Pancreas (tissue), 10 donors: ENCODE measurements at regions of chr7 and their contacts with region 1.

Region 1: GRCh38 chr7:100675581-100676350 is 2.2 kb downstream of the GNB2 start:
- DNase-seq: peak; percentile 71 to 92 (median 78)
- ATAC-seq: peak; percentile 4 to 13 (median 10)
- H3K4me3 ChIP-seq: peak overlapping the region; percentile 87 to 91 (median 90)
- H3K27ac ChIP-seq: peak overlapping the region; percentile 36 to 98 (median 96)
- H3K4me1 ChIP-seq: no peaks in the 10 kb centered on the region
- H3K27me3 ChIP-seq: no peaks in the 10 kb centered on the region
- CTCF ChIP-seq: no peak

Region 2: DNA sequence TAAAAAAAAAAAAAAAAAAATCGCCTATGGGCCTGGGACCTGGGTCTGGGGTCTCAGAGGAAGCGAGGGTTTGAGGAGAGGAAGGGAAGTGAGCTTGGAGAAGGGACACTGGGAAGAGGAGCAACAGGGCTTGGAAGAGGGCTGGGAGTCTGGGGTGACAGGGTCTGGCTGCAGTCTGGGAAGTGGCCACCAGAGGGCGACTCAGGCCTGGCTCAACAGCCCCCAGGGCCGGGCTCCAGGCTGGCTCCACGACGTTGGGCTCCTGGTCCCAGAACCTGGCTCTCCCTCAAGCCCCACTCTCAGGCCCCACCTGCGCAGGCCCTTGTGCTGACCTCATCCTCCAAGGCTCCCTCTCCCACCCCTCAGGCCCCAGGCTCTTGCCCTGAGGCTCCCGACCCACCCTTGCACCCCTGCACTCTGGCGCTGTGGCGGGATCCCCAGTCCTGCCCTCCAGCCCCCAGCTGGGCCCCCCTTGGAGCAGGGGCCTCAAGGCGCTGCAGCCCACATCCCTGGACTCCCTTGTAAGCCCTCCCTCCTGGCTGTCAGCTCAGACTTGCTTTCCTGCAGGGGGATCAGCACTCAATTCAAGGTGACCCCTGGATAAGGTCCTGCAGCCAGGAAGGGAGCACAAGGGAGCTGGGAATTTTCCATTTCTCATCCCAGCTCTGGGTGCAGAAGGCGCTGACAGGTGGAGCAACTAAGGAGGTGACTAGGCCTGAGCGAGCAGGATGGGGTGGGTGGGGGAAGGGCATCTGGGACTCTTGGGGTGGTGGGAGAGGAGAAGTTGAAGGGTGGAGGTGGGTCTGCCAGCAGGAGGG is 206.3 kb before region 1 on chr7:
- intact Hi-C with region 1: loop called in 2 of 3 experiments (anchors 5 to 10 kb)
- DNase-seq: peak; percentile 80 to 99 (median 92)
- ATAC-seq: peak; percentile 64 to 90 (median 82)
- H3K4me3 ChIP-seq: no peak overlapping the region
- H3K27ac ChIP-seq: no peak overlapping the region
- H3K4me1 ChIP-seq: peaks cover 0 to 5% (median 0%) of the 10 kb centered on the region in 3 donors
- H3K27me3 ChIP-seq: no peaks in the 10 kb centered on the region
- CTCF ChIP-seq: peak; percentile 86 to 94 (median 88)

Region 3: GRCh38 chr7:100563809-100564400 is 111.9 kb before region 1 on chr7:
- intact Hi-C with region 1: loop called in 1 of 3 experiments (anchors 10 kb)
- DNase-seq: peak; percentile 66 to 96 (median 85)
- ATAC-seq: peak; percentile 32 to 58 (median 50)
- H3K4me3 ChIP-seq: no peak overlapping the region
- H3K27ac ChIP-seq: no peak overlapping the region
- H3K4me1 ChIP-seq: peaks cover 11 to 25% (median 19%) of the 10 kb centered on the region in 3 donors
- H3K27me3 ChIP-seq: no peaks in the 10 kb centered on the region
- CTCF ChIP-seq: peak; percentile 80 to 98 (median 92)

Region 4: DNA sequence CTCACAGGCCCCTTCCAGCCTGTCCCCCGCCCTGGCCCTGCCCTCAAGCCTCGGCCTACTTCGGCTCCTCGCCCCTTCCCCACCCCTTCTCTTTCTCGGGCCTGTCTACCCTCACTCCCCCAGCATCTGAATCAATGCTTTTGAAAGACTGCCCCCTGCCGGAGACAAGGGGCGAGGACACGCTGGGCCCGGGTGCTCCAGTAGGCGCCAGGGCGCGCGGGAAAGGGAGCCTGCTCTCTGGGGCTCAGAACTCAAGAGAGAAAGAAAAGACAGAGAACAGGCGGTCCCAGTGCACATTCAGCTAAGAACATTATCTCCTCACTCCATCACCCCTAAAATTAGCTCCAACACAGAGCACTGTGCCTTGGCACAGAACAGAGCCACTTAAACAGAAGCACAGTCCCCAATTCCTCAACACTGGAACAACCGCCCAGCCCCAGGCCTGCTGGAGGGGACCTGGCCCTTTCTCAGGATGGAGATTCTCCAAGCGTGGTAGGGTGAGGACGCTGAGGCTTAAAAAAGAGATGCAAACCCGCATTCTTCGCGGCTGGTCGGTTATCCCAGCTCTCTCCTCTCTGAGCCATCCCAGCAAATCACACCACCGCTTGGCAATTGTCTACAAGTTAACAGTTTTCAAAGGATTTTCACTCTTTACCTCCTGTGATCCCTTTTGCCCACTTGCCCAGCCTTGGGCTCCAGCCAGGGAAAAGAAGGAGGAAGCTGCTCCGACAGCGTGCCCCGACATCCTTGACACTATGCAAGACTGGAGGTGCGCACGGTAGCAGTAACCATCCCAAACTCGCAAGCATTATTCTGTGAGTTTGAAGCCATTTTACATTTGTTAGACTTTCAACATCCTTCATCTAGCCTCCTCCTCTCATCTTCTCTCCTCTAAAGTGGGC is 16.2 kb after region 1 on chr7:
- intact Hi-C with region 1: loop called in 1 of 3 experiments (anchors 2 kb)
- DNase-seq: peak; percentile 67 to 94 (median 82)
- ATAC-seq: peak; percentile 66 to 89 (median 86)
- H3K4me3 ChIP-seq: peak overlapping the region in 2 of 4 donors; percentile 92 to 96
- H3K27ac ChIP-seq: no peak overlapping the region
- H3K4me1 ChIP-seq: peaks cover 10 to 17% (median 14%) of the 10 kb centered on the region in 3 donors
- H3K27me3 ChIP-seq: no peaks in the 10 kb centered on the region
- CTCF ChIP-seq: peak; percentile 76 to 95 (median 87)